Ascending aorta (tissue), 2 donors: ENCODE measurements at regions of chr12 and their contacts with region 1.

Region 1: DNA sequence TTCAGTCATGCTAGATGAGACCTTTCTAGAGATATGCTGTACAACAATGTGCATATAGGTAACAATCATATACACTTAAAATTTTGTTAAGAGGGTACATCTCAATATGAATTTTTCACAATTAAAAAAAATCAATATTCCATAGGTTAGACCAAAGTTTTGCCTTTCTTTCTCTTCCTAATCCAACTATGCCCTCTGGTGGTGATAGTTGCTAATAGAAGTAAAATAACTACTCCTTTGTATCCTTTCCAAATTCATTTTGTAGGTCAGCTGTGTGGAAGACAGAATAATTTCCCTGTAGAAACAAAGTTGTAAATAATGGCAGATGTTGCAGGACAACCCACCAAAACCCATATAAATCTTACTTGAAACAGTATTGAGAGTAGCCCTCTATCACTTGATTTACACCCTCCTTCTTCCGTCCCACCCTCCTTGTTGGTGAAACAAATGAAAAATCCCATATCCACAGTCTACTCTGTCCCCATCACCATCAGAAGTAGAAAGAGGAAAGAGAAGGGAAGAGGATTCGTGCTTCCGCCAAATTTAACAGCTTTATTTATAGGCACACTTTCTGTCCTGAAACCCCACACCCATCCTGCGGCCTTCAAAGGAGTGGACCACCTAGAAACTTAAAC is 34.2 kb upstream of the KICS2 start:
- DNase-seq: no peak
- H3K4me3 ChIP-seq: no peak overlapping the region
- H3K27ac ChIP-seq: no peak overlapping the region
- H3K4me1 ChIP-seq: peaks cover 0 to 9% of the 10 kb centered on the region in 2 donors
- H3K27me3 ChIP-seq: no peaks in the 10 kb centered on the region
- CTCF ChIP-seq: peak; percentile 44 to 74 (median 59)

Region 2: DNA sequence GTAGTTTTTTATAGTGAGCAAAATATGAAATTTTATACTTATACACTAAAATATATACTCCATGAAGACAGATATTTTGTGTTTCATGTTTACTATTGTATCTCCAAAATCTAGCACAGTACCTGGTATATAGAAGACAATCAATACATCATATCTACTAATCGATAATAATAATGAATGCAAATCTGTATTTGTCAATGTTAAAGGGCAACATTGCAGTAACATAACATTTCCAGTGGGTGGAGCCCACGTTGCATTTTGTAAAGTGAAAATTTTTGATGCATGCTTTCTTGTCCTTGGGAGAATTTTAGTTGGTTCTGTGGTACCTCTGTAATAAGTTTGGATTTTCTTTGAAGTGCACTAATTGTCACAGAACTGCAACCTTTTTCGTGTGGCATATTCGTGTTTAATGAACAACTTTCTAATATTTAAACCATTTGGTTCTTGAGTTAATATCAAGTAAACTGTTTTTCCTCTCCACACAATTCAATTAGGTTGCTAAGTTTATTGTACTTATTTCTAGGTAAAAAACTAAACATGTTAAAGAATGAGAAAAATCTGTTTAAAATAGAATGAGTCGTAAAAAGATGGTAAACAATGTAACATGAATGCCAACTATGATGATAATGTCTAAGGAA is 1152.7 kb before region 1 on chr12:
- intact Hi-C with region 1: loop called (anchors 10 kb)
- DNase-seq: no peak
- H3K4me3 ChIP-seq: no peak overlapping the region
- H3K27ac ChIP-seq: no peak overlapping the region
- H3K4me1 ChIP-seq: no peaks in the 10 kb centered on the region
- H3K27me3 ChIP-seq: no peaks in the 10 kb centered on the region
- CTCF ChIP-seq: peak; percentile 40 to 77 (median 66)

Region 3: DNA sequence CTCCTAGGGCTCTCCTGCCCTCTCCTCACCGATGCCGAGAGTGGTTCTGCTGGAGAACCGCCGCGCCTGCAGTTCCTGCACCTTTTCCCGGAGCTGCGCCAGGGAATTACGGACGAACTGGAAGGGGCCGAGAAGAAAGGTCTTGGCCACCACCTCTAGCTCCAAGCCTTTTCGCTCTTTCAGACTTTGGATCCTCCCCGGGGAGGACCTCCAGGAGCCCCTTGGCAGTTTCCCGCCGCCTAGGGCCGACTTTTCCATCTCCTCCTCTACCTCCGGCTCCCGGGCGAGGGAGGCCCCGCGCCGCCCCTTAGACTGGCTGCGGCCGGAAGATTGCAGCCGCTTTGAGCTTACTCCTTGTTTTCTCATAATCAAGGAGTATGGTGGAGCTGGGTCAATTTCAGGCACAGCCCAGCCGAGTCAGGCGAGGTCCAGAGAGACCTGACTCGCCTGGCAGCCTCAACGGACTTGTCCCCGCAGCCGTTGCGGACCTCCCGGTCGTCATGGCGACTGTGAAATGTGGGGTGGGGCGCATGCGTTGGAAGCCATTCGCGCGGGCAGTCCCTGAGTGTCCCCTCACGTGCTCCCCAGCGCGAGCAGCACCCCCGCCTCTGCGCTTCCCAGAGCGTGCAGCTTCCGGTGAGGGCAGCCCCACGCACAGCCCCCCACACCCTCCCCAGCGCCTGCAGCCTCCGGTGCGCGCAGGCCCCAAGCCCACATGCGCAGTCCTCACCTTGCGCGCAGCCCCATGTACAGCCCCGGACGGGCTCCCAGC is 588.1 kb before region 1 on chr12 and contains the start of gene DPY19L2:
- intact Hi-C with region 1: loop called (anchors 10 kb)
- DNase-seq: peak; percentile 12 to 73
- H3K4me3 ChIP-seq: peak within 1 kb of the TSS; percentile 62 to 75
- H3K27ac ChIP-seq: peak within 1 kb of the TSS; percentile 53 to 71
- H3K4me1 ChIP-seq: no peaks in the 10 kb centered on the region
- H3K27me3 ChIP-seq: no peaks in the 10 kb centered on the region
- CTCF ChIP-seq: no peak
- total RNA-seq, gene DPY19L2: 3.2 TPM

Region 4: GRCh38 chr12:63826006-63826585 is 430.2 kb before region 1 on chr12:
- intact Hi-C with region 1: loop called (anchors 1 kb)
- DNase-seq: no peak
- H3K4me3 ChIP-seq: no peak overlapping the region
- H3K27ac ChIP-seq: no peak overlapping the region
- H3K4me1 ChIP-seq: no peaks in the 10 kb centered on the region
- H3K27me3 ChIP-seq: no peaks in the 10 kb centered on the region
- CTCF ChIP-seq: peak; percentile 50 to 75 (median 70)